ENCODE measurements at regions of chr3 and their contacts with region 1.

Region 1: GRCh38 chr3:32177702-32178198 is 60.7 kb upstream of the CMTM8 start:
- DNase-seq: no peak
- ATAC-seq: peak; percentile 69
- H3K4me3 Mint-ChIP-seq: no peak overlapping the region
- H3K27ac Mint-ChIP-seq: no peak overlapping the region
- H3K4me1 Mint-ChIP-seq: peaks cover 21% of the 10 kb centered on the region
- H3K27me3 Mint-ChIP-seq: peaks cover 1% of the 10 kb centered on the region
- CTCF ChIP-seq: no peak

Region 2: DNA sequence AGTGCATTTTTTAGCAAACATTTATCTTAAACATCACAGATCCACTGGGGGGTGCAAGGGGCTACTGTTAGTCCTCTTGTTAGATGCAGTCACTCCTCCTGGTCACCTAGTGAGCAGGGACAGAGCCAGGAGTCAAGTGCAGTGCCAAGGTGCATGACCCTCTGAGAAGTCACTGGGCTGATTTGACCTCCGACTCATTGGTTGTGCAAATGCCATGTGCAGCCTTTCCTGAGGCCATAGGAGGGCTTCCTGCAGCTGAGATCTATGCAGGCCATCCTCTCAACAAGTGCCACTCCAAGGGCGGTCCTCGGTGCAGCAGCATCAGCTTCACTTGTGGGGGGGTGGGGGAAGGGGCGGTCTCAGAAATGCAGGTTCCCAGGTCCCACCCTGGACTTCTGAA is 11.1 kb before region 1 on chr3:
- CTCF ChIA-PET with region 1: no interaction called
- POLR2A ChIA-PET with region 1: no interaction called
- intact Hi-C with region 1: no loop called
- DNase-seq: no peak
- ATAC-seq: no peak
- H3K4me3 Mint-ChIP-seq: no peak overlapping the region
- H3K27ac Mint-ChIP-seq: no peak overlapping the region
- H3K4me1 Mint-ChIP-seq: no peaks in the 10 kb centered on the region
- H3K27me3 Mint-ChIP-seq: no peaks in the 10 kb centered on the region
- CTCF ChIP-seq: no peak

Region 3: DNA sequence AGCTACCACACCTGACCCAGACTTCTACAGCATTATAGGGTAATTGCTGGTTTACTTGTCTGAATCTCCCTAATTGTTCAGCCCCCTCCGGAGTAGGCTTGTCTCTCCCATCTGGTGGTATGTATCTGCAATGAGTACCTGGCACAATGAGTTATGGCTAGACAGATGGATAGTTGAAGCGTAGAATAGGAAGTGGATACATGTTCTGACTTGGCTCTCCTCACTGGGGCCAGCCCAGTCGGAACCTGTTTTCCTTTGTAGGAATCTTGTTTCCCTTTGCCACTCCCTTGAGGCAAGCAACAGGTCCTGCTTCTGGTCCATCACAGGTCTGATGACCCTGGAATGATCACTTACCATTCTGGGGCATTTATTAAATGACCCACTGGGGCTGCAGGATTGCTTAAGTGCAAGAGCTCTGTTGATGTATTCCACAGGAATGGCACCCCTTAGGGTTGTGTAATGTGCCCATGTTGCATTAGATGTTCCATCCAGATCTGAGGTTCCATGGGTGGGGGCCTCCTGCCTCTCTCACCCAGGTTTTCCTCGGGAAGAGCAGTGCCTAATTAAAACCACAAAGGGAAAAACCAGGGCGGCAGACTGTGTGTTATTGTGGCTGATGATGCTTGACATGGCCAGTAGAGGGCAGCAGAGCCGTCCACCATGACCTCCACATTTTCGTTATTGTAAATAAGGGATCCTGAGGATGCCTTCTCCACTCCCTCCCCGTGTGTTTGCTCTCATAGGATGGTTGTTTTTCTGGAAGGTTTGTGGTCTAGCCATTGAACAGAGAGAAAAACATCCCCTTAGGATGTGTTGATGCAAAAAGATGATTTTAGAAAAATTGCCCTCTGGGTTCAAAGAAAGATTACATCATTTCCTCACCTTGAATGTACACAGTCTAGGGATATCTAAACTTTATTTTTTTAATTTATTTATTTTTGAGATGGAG is 118.8 kb after region 1 on chr3:
- CTCF ChIA-PET with region 1: interaction called, 4 read pairs
- POLR2A ChIA-PET with region 1: no interaction called
- intact Hi-C with region 1: loop called (anchors 2 kb)
- DNase-seq: peak; percentile 40
- ATAC-seq: peak; percentile 82
- H3K4me3 Mint-ChIP-seq: no peak overlapping the region
- H3K27ac Mint-ChIP-seq: no peak overlapping the region
- H3K4me1 Mint-ChIP-seq: peaks cover 4% of the 10 kb centered on the region
- H3K27me3 Mint-ChIP-seq: no peaks in the 10 kb centered on the region
- CTCF ChIP-seq: peak; percentile 88

Region 4: GRCh38 chr3:32401556-32402081 is 223.9 kb after region 1 on chr3:
- CTCF ChIA-PET with region 1: no interaction called
- POLR2A ChIA-PET with region 1: no interaction called
- intact Hi-C with region 1: loop called (anchors 1 kb)
- DNase-seq: peak; percentile 45
- ATAC-seq: peak; percentile 71
- H3K4me3 Mint-ChIP-seq: peak overlapping the region; percentile 89
- H3K27ac Mint-ChIP-seq: peak overlapping the region; percentile 97
- H3K4me1 Mint-ChIP-seq: peaks cover 86% of the 10 kb centered on the region
- H3K27me3 Mint-ChIP-seq: no peaks in the 10 kb centered on the region
- CTCF ChIP-seq: no peak

Region 5: DNA sequence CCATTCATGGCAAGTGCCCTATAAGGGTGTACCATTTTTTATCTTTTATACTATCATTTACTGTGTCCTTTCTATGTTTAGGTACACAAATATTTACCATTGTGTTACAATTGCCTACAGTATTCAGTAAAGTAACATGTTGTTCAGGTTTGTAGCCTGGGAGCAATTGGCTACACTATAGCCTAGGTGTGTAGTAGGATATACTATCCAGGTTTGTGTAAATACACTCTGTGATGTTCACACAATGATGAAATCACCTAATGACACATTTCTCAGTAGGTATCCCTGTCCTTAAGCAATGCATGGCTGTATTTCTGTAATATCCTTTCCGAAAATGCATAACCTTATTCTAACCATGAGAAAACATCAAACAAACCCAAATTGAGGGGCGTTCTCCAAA is 489.4 kb after region 1 on chr3:
- CTCF ChIA-PET with region 1: no interaction called
- POLR2A ChIA-PET with region 1: no interaction called
- intact Hi-C with region 1: loop called (anchors 1 kb)
- DNase-seq: no peak
- ATAC-seq: no peak
- H3K4me3 Mint-ChIP-seq: no peak overlapping the region
- H3K27ac Mint-ChIP-seq: no peak overlapping the region
- H3K4me1 Mint-ChIP-seq: no peaks in the 10 kb centered on the region
- H3K27me3 Mint-ChIP-seq: peaks cover 6% of the 10 kb centered on the region
- CTCF ChIP-seq: no peak

Region 6: DNA sequence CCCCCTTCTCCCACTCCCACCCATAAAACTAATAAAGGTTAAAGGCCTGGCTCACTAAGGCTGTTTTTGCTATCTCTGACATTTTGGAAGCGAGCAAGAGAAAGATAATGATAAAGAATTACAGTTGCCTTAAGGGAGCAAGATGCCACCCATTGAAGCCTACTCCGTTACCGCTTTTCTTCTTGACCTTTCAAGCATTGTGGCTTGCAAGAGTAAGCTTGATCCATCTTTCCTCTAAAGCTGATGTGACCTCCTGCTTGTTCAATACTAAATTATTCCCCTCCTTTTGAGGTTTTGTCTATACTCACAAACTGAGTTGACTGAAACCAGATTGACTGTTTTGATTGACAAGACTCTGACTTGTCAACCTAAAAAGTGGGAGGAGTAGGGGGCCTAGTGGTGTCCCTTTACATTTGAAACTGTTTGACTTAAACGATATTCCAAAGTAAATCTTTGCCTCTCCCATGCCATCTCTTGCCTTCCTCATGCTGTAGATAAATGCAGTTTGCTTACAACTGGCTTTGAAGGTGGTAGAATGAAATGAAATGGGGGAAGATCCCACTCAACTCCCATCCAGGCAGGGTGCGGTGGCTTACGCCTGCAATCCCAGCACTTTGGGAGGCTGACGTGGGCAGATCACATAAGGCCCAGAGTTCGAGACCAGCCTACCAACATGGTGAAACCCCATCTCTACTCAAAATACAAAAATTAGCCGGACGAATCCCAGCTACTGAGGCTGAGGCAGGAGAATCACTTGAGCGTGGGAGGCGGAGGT is 648.0 kb after region 1 on chr3:
- CTCF ChIA-PET with region 1: no interaction called
- POLR2A ChIA-PET with region 1: no interaction called
- intact Hi-C with region 1: no loop called
- DNase-seq: no peak
- ATAC-seq: no peak
- H3K4me3 Mint-ChIP-seq: no peak overlapping the region
- H3K27ac Mint-ChIP-seq: no peak overlapping the region
- H3K4me1 Mint-ChIP-seq: no peaks in the 10 kb centered on the region
- H3K27me3 Mint-ChIP-seq: peaks cover 19% of the 10 kb centered on the region
- CTCF ChIP-seq: no peak

Region 7: GRCh38 chr3:32842531-32842931 is 664.8 kb after region 1 on chr3:
- CTCF ChIA-PET with region 1: no interaction called
- POLR2A ChIA-PET with region 1: no interaction called
- intact Hi-C with region 1: no loop called
- DNase-seq: no peak
- ATAC-seq: no peak
- H3K4me3 Mint-ChIP-seq: no peak overlapping the region
- H3K27ac Mint-ChIP-seq: no peak overlapping the region
- H3K4me1 Mint-ChIP-seq: peaks cover 4% of the 10 kb centered on the region
- H3K27me3 Mint-ChIP-seq: peaks cover 3% of the 10 kb centered on the region
- CTCF ChIP-seq: no peak

Region 8: DNA sequence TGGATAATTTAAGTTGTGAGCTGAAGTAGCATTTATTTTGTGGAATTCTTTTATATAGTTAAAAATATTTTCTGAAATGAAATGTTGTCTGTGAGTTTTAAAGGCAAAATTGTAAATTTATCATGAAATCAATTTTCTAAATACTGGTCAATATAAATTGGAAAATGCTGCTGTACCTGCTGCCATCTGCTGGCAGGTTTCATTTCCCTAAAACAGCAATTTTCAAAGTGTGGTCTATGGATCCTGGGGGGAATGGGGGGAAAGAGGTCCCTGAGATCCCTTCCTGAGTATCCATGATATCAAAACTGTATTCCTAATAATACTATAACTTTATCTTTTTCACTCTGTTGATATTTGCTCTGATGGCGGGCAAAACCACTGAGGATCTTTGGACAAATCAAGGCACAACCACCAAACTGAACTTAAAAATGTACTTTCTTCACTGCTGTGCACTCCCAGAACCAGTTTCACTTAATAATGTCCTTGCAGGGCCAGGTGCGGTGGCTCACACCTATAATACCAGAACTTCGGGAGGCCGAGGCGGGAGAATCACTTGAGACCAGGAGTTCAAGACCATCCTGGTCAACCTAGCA is 756.5 kb after region 1 on chr3:
- CTCF ChIA-PET with region 1: no interaction called
- POLR2A ChIA-PET with region 1: no interaction called
- intact Hi-C with region 1: loop called (anchors 5 kb)
- DNase-seq: no peak
- ATAC-seq: no peak
- H3K4me3 Mint-ChIP-seq: no peak overlapping the region
- H3K27ac Mint-ChIP-seq: no peak overlapping the region
- H3K4me1 Mint-ChIP-seq: no peaks in the 10 kb centered on the region
- H3K27me3 Mint-ChIP-seq: peaks cover 9% of the 10 kb centered on the region
- CTCF ChIP-seq: no peak